Heart right ventricle (tissue), 16 donors: ENCODE measurements at regions of chr6 and their contacts with region 1.

Region 1: DNA sequence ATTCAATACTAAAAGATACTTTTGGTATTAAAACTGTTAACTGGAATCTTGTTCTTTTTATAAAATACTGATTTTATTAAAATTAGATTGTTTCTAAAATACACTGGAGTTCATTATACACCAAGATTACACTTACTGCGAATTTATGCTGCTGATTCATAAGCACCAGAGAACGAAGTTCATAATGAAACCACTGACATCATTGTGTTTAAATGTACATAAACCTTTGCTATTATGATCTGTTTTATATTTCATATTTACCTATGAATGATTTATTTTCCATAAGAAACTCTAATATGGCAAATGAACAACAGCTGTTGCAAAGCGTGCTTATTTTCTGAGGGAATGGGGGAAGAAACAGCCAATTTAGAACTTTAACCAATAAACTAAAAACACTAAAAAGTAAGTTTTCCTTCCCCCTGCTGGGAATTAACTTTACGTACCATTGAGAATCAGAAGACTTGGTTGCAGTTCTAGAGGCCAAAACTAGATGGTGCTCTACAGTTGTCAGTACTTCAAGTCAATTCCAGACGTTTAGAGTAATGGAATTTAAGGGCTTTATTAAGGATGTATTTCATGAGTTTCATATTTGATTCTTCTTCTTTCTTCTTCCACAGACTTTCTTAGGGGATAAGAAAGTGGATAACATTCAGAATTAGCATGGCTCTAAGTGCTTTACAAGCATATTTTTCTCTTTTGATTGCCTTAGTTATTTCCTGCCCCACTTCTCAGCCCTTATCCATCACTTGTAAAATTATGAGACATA is 30.8 kb upstream of the COL19A1 start:
- DNase-seq: peak in 1 of 2 donors; percentile 20
- ATAC-seq: peak in 2 of 8 donors; percentile 53 to 71
- H3K4me3 ChIP-seq: no peak overlapping the region
- H3K27ac ChIP-seq: no peak overlapping the region
- H3K4me1 ChIP-seq: no peaks in the 10 kb centered on the region
- H3K27me3 ChIP-seq: peaks cover 0 to 10% (median 0%) of the 10 kb centered on the region in 7 donors
- CTCF ChIP-seq: peak; percentile 32 to 88 (median 79)

Region 2: DNA sequence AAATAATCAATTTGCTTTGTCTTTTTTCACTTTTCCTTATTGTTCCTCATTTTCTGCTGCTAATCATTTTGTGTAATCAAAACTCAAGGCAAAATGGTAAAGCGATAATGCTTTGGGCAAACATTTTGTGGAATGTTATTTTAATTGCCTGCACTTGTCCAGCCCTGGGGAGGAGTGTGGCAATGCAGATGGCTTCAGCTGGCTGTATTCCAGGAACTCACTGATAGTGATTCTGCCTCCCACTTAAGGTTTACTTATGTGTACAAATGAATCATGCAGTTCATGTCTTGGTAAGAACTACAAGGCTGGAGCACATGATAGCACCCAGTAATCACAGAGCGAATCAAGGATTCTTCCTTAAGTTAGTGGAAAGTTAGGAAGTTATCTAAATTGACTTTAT is 138.6 kb after region 1 on chr6:
- intact Hi-C with region 1: no loop called
- DNase-seq: peak in 1 of 2 donors; percentile 21
- ATAC-seq: peak in 6 of 8 donors; percentile 55 to 89 (median 73)
- H3K4me3 ChIP-seq: no peak overlapping the region
- H3K27ac ChIP-seq: no peak overlapping the region
- H3K4me1 ChIP-seq: peaks cover 0 to 13% (median 0%) of the 10 kb centered on the region in 9 donors
- H3K27me3 ChIP-seq: no peaks in the 10 kb centered on the region
- CTCF ChIP-seq: no peak

Region 3: GRCh38 chr6:70166088-70166958 is 330.7 kb after region 1 on chr6:
- intact Hi-C with region 1: loop called in 1 of 10 experiments (anchors 10 kb)
- DNase-seq: peak in 1 of 2 donors; percentile 23
- ATAC-seq: peak in 4 of 8 donors; percentile 45 to 64 (median 58)
- H3K4me3 ChIP-seq: no peak overlapping the region
- H3K27ac ChIP-seq: no peak overlapping the region
- H3K4me1 ChIP-seq: no peaks in the 10 kb centered on the region
- H3K27me3 ChIP-seq: peaks cover 0 to 16% (median 0%) of the 10 kb centered on the region in 7 donors
- CTCF ChIP-seq: peak in 8 of 9 donors; percentile 14 to 65 (median 53)